OCI-LY7 (cell line): ENCODE measurements at regions of chr17 and their contacts with region 1.

Region 1: GRCh38 chr17:49434821-49435670 is 20.4 kb upstream of the PHB1 start:
- DNase-seq: peak; percentile 63
- H3K4me3 ChIP-seq: no peak overlapping the region
- H3K27ac ChIP-seq: no peak overlapping the region
- H3K4me1 ChIP-seq: peaks cover 22% of the 10 kb centered on the region
- CTCF ChIP-seq: peak; percentile 83

Region 2: DNA sequence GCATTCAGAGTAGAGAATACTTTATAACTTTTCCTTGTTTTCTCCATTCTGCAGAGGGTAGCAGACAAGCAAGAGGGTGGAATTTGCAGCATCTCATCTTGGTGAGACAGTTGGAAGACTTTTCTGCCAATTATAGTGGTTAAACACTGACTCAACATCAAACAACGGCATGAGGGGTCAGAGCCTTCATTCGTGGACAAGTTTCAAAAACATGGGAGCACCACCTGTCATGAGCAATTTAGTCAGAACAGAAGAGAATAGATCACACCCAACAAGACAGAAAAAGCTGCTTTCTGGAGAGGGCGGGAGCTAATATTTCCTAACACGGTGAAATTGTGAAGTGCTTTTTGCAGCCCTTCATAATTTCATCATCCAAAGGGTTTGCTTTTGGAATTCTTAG is 55.1 kb before region 1 on chr17:
- CTCF ChIA-PET with region 1: no interaction called
- POLR2A ChIA-PET with region 1: no interaction called
- intact Hi-C with region 1: no loop called
- DNase-seq: no peak
- H3K4me3 ChIP-seq: no peak overlapping the region
- H3K27ac ChIP-seq: no peak overlapping the region
- H3K4me1 ChIP-seq: no peaks in the 10 kb centered on the region
- CTCF ChIP-seq: no peak

Region 3: GRCh38 chr17:49390548-49391324 is 44.3 kb before region 1 on chr17:
- CTCF ChIA-PET with region 1: no interaction called
- POLR2A ChIA-PET with region 1: no interaction called
- intact Hi-C with region 1: no loop called
- DNase-seq: peak; percentile 80
- H3K4me3 ChIP-seq: peak overlapping the region; percentile 55
- H3K27ac ChIP-seq: peak overlapping the region; percentile 79
- H3K4me1 ChIP-seq: peaks cover 56% of the 10 kb centered on the region
- CTCF ChIP-seq: no peak

Region 4: DNA sequence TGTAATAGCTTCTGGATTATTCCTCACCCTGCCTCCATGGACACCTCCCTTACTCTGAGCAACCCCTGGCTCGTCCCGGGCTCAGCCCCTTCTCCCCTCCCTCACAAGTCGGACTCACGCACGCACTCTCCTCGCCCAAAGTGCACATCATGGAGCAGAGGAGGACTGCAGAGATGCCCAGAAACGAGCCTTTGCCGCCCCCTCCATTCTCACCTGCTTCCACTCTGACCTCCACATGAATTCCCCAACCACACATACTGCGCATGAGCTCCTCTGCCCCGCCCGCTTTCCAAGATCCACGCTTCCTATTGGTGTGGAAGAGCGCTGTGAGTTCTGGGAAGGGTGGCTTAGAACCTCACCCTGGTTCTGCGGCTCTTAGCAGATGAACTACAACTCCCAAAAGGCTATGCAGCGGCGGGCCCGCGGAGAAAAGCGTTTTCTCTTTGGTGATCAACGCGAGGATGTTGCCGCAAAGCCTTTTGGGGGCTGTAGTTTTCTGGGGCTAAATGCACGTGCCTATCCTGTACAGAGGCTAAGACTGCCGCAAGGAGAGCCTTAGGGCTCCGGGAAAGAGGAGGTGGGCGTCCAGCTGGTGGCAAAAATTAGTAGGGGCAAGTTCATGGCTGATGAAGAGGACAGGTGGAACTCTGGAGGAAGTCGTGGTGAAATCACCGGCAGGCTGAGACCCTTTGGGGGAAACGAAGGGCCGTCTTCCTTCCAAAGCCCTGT is 20.3 kb before region 1 on chr17 and contains the start of gene PHB1:
- CTCF ChIA-PET with region 1: no interaction called
- POLR2A ChIA-PET with region 1: no interaction called
- intact Hi-C with region 1: no loop called
- DNase-seq: peak; percentile 98
- H3K4me3 ChIP-seq: peak within 1 kb of the TSS; percentile 96
- H3K27ac ChIP-seq: no peak within 1 kb of the TSS
- H3K4me1 ChIP-seq: peaks cover 16% of the 10 kb centered on the region
- CTCF ChIP-seq: no peak
- total RNA-seq, gene PHB1: 131 and 137 TPM in 2 replicates

Region 5: GRCh38 chr17:49567871-49568694 is 133.0 kb after region 1 on chr17:
- CTCF ChIA-PET with region 1: no interaction called
- POLR2A ChIA-PET with region 1: no interaction called
- intact Hi-C with region 1: no loop called
- DNase-seq: peak; percentile 83
- H3K4me3 ChIP-seq: no peak overlapping the region
- H3K27ac ChIP-seq: no peak overlapping the region
- H3K4me1 ChIP-seq: no peaks in the 10 kb centered on the region
- CTCF ChIP-seq: peak; percentile 88

Region 6: DNA sequence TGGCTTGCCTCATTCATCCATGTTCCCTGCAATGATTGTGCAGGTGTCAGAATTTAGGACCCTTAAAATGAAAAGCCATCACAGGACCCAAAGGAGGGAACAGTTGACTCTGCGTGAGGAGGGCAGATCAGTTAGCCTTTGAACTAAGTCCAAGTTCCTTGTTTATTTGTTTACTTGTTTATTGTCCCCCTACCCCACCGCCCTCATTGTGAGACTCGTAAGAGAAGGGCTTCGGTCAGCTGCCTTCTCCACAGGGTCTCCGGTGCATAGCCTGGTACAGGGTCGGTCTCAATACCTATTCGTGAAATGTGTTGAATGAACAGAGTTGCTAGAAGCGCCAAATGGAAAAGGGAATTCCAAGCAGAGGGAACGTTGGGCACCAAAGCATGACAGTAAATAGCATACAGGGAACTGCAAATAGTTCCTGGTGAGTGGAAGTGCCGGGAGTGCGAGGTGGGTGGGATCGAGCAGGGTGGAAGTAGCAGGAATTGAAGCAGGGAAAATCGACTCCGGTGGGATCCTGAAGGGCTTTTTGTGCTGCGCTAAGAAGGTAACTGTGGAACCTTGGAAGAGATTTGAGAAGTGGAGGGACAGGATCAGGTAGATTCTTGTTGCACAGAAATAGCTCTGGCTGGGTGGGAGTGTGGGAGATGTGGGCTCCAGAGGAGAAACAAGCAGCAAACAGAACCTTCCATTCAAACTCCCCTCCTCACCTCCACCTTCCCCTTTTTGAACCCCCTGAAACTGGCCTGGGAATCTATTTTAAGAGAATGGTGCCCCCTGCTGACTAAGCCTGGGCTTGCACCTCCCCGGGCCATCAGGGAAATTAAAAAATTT is 260.0 kb after region 1 on chr17:
- CTCF ChIA-PET with region 1: no interaction called
- POLR2A ChIA-PET with region 1: interaction called, 4 read pairs
- intact Hi-C with region 1: loop called (anchors 5 kb)
- DNase-seq: peak; percentile 76
- H3K4me3 ChIP-seq: no peak overlapping the region
- H3K27ac ChIP-seq: no peak overlapping the region
- H3K4me1 ChIP-seq: peaks cover 10% of the 10 kb centered on the region
- CTCF ChIP-seq: peak; percentile 99